ENCODE measurements at regions of chr2 and their contacts with region 1.

Region 1: GRCh38 chr2:236523249-236523648 is 46.4 kb upstream of the ACKR3 start:
- DNase-seq: no peak
- H3K4me3 ChIP-seq: no peak overlapping the region
- H3K27ac ChIP-seq: no peak overlapping the region
- H3K4me1 ChIP-seq: no peaks in the 10 kb centered on the region
- H3K27me3 ChIP-seq: peaks cover 60% of the 10 kb centered on the region
- CTCF ChIP-seq: no peak

Region 2: DNA sequence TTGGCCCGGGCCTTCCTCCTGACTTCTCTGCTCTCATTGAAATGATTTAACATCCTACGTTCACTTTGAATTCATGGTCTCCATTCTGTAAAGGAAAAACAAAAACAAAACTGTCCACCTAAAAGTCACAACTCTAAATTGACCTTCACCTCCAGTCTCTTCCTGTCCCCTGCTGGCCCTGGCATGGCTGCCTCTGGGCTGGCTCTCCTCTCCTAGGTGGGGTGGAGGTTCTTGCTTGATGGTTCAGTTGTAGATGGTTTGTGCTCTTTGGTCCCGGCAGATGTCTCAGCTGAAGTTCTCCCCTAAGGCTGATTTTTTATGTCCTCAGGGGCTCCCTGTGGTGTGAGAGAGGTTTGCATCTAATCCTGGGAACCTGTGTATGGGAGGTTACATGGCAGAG is 167.5 kb after region 1 on chr2:
- CTCF ChIA-PET with region 1: no interaction called
- POLR2A ChIA-PET with region 1: interaction called, 10 read pairs
- intact Hi-C with region 1: no loop called
- DNase-seq: no peak
- H3K4me3 ChIP-seq: no peak overlapping the region
- H3K27ac ChIP-seq: no peak overlapping the region
- H3K4me1 ChIP-seq: no peaks in the 10 kb centered on the region
- H3K27me3 ChIP-seq: no peaks in the 10 kb centered on the region
- CTCF ChIP-seq: no peak